ENCODE measurements at regions of chr1 and their contacts with region 1.

Region 1: GRCh38 chr1:29569971-29570634 is 333.8 kb downstream of the PTPRU start:
- DNase-seq: peak; percentile 100
- H3K4me3 ChIP-seq: no peak overlapping the region
- H3K27ac ChIP-seq: peak overlapping the region; percentile 59
- H3K4me1 ChIP-seq: peaks cover 47% of the 10 kb centered on the region
- H3K27me3 ChIP-seq: no peaks in the 10 kb centered on the region
- CTCF ChIP-seq: no peak

Region 2: DNA sequence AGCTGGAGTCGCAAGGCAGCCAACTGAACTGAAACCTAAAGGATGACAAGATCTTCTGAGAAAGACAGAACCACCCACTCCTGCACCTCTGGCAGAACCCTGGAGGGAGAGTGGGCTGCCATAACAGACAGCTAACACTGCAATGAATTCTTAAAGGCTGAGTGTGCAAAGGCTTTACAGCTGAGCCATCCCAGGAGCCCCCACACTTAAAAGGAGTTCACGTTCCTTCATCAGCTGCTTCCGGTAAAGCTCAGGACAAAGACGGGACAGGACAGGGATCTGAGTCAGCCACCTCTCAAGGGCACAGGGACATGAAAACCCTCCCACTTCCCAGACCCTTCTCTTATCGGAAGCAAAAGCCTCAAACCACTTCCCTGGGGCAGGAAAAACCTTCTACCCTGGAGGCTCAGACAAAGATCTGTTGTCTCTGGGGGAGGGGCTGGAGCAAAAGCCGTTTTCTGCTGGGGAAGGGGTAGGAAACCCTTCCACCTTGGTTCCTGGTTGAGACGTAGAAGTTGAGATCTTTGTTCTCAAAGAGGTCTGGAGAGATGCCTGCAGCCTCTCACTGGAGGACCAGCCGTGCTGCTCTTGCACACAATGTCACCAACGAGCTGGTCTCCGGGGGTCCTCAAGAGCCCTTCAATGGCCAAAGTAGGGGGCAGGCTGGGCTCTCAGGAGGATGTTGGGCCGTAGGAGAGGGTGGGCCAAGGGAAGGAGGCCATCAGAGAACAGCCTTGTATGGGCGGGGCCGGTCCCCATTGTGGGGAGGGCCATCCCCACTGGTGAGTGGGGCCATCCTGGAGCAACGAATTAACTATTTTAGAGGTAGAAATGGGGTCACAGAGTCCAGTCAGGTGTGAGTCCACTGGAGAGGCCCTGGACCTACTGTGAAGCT is 118.6 kb after region 1 on chr1:
- CTCF ChIA-PET with region 1: no interaction called
- dilution Hi-C with region 1: no loop called
- in situ Hi-C with region 1: no loop called
- intact Hi-C with region 1: loop called (anchors 5 kb)
- DNase-seq: peak; percentile 48
- H3K4me3 ChIP-seq: no peak overlapping the region
- H3K27ac ChIP-seq: no peak overlapping the region
- H3K4me1 ChIP-seq: peaks cover 32% of the 10 kb centered on the region
- H3K27me3 ChIP-seq: no peaks in the 10 kb centered on the region
- CTCF ChIP-seq: no peak

Measured in mammary epithelial cell (primary cell).